Head of caudate nucleus (tissue), 42 donors: ENCODE measurements at regions of chr11 and their contacts with region 1.

Region 1: GRCh38 chr11:82900277-82901164 is at the start of gene PRCP:
- DNase-seq: peak; percentile 68 to 96 (median 90)

Region 2: DNA sequence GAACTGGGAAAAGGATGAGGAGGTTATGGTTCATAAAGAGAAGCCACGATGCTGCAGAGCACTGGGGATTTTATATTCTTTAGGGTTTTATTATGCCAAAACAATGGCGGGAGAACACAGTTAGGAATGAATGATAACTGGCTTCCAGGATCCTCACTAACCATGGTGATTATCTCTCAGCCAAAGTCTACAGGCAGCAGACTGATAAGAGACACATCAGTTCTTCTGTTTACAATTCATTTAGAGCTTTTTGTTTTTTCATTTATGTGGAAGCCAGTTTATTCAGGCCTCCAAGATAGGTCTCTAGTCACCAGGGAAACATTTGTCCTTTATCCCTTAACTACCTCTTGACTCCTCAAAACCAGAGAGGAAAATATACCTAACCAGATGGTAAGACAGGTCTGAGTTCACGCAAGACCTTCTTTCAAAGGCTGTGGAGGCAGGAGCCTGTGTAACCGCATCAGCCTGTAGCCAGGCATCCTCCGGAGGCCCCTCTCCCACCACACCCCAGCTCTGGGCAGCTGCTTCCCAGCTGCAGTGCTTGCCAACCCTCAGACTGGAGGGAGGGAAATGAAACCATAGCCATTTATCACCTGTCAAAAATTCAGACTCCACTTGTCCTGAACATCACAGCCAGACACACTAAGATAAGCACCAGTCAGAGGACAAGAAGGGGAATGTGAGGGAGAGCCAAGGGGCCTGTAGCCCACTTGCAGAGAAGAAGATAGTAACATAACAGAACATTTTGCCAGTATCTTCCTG is 109.6 kb before region 1 on chr11:
- intact Hi-C with region 1: no loop called
- DNase-seq: no peak

Region 3: DNA sequence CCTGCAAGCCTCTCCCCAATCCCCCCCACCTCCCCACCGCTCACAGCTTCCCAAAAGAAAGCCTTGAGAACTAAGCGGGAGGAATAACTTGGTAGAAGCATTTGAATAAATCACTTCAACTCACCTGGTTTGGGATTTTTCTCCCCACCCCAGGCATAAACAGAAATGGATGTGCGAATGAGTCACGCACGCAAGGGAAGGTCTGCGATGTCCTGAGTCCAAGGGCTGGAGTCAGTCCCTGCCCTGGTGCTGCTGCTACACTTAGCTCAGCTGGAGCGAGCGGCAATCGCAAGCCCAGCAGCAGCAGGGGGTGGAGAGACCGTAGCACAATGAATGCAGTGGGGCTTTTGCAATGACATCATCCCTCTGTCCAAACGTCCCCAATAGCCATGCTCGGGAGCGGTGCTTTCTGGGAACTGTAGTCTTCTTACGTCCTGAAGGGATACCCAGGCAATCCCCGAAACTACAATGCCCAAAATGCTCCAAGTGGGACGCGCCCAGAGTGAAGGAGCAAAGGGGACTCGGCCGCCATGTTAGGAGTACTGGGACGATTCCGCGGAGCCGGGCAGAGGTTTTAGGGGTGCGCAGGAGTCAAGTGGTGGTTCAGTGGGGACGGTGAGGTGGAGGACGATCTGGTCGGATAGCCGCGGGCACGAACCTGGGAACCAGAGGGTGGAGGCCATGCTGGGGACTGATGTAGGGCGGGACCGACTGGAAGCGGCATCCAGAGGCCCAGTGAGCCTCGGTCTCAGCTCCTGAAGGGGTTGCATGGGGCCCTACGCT is 171.2 kb after region 1 on chr11 and contains the start of gene RAB30:
- intact Hi-C with region 1: loop called (anchors 10 kb)
- DNase-seq: peak; percentile 93 to 100 (median 99)

Region 4: DNA sequence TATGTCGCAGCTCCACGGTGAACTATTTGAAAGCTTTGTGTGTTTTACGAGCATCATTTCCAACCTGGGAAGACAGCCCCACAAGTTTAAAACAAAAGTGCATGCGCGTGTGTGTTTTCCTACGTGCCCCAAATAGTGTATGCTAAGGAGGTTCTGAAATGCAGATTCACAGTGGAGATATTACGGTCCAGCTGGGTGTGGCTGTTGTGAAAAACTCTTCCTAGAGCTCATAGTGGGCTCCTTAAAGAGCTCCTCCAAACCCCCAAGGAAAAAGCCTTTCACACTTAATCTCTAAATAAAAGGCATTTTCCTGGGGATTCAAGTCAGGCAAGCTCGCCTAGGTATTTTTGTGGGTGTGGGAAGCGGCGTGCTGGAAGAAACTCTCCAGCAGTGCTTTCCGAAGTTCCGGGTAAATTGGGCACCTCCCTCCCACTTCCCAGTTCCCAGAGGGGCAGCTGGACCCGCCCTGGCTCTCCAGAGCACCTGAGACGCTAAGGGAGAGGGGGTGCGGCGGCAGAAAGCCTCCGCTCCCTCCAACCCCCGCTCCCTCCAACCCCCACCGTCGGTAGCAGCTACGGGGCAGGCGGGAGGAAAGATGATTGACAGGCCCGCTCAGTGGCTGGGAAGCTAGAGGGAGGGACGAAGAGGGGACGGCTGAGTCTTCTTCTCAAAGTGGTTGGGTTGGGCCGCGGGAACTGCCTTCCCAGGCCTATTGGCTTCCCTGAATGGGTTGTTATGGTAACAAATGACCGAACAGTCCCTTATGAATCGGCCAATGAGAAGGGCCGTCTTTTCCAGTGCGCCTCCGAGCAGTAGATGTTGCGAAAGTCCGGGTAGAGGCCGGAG is 255.9 kb after region 1 on chr11:
- intact Hi-C with region 1: loop called (anchors 10 kb)
- DNase-seq: peak in 37 of 42 donors; percentile 27 to 100 (median 99)

Region 5: DNA sequence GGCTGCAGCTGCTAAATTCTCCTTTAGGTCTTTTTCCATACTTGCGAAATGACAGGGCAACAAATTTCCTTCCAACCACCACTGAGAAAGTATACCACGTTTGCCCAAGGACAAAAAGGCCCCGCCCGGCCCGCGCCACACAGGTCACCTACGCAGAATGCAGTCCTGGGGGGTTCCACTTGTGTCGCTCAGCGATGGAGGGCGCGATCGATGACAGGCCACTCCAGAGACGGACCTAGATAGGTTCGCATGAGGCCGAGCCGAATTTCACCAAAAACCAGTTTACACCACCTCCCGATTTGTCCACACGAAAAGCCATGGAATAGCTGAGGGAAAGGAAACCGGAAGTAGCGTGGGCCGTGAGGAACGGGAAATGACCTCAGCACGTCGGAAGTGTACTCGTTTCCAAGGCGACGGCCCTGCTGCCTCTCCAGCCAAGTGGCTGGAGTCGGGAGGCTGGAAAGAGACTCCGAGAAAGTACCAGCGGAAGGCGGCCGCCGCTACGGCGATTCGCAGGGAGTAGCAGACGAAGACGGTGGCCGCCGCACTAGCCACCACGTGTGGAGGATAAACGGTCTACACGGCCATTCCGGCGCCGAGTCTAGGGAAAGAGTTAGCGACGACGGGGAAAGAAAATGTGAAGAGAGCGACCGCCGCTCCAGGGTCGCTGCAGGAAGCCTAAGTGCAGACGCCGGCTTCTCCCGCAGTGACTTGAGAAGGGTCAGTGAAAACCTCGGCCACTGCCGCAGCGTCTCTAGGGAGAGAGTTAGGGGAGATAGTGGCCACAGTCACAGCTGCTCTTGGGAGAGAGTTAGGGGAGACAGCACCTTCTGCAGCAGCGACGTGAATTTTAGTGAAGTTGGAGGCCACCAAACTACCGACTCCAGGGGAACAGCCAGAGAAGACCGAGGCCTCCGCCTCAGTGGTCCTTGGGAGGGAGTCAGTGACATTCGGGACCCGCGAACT is 293.1 kb after region 1 on chr11 and contains the start of gene ANKRD42:
- intact Hi-C with region 1: loop called (anchors 10 kb)
- DNase-seq: peak; percentile 88 to 97 (median 94)

Region 6: DNA sequence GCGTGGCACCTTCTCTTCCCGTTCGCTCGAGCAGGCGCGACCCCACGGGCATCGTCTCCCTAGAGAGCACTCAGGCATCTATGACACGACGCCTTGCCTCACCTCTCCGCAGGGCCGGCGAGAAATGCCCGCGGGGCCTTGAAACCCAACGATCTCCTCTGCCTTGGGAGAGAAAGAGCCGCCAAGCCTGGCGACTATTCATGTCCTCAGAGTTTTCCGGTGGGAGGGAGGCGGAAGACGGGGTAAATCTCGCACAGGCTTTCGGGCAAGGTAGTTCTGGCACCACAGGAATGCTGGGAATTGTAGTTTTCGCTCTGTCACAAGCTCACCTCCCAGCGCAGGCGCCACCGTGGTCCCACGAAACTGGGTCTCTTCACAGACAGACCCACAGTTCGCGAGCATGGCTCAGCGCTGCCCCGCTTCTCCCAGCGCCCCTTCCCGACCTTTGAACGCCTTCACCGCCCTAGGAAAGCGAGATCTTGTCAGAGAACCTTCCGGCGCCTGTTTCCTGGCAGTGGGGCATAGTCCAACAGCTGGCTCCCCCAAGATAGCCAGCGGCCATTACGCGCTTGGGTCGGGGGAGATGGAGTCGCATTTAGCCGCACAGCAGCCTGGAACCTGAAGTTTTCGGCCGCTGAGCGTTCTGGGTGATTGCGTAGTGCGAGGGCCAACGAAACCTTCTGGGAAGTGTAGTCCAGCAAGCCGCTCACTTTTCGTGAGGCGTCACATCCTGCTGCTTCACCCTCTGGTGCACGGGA is 385.4 kb after region 1 on chr11 and contains the start of gene CCDC90B:
- intact Hi-C with region 1: loop called (anchors 10 kb)
- DNase-seq: peak; percentile 94 to 99 (median 98)

Region 7: DNA sequence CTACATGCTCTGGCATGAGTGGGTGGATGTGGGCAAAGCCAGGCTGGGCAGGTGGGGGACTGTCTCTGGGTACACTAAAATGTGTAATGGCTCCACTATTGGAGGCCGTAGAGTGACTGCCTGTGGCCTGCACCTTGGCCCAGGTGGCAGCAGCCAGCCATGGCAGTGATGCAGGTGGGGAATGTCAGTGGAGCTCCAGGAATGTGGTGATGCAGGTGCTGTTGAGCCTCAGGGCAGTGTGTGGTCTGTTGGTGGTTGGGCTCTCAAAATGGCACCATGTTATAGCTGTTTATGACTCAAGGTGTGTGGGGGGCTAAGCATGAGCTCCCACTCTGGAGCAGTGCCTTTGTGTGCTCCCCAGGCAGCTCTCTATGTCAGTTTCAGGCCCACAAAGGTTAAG is 425.8 kb after region 1 on chr11:
- intact Hi-C with region 1: no loop called
- DNase-seq: no peak